ENCODE measurements at regions of chr17 and their contacts with region 1.

Region 1: GRCh38 chr17:74864866-74865395 is 5.2 kb upstream of the GRIN2C start:
- DNase-seq: peak; percentile 93

Region 2: DNA sequence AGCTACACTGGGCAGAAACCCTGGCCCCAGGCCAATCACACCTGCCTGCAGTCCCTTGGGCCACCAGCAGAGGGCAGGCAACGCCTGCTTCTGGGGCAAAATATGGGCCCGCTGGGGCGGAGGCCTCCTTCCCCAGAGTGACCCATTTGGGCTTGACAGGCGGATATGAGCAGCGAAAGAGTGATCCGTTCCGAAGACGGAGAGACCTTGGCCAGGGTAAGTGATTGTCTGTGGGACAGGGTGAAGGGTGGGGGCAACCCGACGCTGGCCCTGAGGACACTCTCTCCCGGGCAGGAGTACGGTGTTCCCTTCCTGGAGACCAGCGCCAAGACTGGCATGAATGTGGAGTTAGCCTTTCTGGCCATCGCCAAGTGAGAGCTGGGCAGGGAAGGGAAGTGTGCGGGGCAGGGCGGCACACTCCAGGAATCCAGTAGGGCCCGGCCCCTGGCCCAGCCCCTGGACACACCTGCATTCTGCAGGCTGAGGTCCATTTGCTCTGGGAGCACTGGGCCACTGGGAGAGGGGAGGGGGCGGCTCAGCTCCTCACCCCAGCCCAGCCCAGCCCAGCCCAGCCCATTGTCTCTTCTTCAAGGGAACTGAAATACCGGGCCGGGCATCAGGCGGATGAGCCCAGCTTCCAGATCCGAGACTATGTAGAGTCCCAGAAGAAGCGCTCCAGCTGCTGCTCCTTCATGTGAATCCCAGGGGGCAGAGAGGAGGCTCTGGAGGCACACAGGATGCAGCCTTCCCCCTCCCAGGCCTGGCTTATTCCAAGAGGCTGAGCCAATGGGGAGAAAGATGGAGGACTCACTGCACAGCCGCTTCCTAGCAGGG is 120.0 kb before region 1 on chr17:
- intact Hi-C with region 1: loop called (anchors 1 to 5 kb)
- DNase-seq: peak; percentile 94

Region 3: GRCh38 chr17:74790161-74791054 is 74.5 kb before region 1 on chr17:
- intact Hi-C with region 1: loop called in 1 of 2 experiments (anchors 5 kb)
- DNase-seq: no peak

Region 4: DNA sequence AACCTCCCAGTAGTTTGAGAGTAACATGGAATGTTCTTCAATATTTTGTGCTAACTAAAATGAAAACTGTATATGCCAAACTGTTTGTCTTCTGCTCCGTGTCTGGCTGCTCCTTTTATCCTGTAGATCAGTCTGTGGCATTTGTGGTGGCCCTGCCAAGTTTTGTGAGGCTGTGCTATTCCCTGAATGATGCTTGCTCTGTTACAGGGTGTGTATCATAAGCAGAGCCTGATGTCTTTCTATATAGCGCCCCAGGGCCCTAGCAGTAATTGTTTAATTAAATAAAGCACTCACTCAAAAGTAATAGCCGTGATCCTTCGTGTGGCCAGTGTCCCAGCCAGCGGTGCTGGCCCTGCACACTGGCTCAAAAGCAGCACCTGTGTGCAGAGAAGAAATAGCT is 61.0 kb before region 1 on chr17:
- intact Hi-C with region 1: loop called in 1 of 2 experiments (anchors 5 kb)
- DNase-seq: no peak

Measured in posterior vena cava (tissue), 2 donors.